Right ventricle myocardium superior (tissue), 1 donor: ENCODE measurements at regions of chr3 and their contacts with region 1.

Region 1: DNA sequence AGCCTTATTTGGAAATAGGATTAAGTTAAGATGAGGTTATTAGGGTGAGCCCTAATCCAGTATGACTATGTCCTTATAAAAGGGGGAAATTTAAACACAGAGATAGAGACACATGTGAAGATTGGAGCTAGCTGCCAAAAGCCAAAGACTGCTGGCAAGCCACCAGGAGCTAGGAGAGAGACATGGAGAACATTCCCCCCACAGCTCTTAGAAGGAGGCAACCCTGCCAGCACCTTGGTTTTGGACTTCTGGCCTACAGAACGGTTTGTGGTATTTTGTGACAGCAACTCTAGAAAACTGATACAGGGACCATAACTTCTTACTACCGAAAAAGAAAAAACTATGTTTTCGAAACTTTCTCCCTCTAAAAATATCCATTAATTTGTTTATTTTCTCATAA is 245.3 kb upstream of the RARB start:
- DNase-seq: no peak
- ATAC-seq: no peak

Region 2: DNA sequence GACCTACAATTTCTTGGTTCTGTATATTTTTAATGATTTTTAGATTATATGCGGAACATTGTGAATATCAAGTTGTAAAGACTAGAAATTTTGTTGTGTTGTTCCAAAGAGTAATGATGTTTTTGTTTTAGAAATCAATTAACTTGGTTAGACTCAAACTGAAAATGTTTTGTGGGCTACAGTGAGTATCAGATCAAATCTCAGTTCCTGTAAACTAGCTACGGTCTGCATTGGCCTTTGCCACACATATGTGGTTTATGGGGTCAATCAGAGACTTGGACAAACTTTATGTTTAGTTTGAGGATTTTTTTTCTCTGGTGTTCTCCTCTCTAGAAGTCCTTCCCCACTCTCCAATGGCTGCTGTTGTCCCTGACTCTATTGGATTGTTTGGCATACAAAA is 380.2 kb before region 1 on chr3:
- intact Hi-C with region 1: no loop called
- DNase-seq: no peak
- ATAC-seq: no peak

Region 3: DNA sequence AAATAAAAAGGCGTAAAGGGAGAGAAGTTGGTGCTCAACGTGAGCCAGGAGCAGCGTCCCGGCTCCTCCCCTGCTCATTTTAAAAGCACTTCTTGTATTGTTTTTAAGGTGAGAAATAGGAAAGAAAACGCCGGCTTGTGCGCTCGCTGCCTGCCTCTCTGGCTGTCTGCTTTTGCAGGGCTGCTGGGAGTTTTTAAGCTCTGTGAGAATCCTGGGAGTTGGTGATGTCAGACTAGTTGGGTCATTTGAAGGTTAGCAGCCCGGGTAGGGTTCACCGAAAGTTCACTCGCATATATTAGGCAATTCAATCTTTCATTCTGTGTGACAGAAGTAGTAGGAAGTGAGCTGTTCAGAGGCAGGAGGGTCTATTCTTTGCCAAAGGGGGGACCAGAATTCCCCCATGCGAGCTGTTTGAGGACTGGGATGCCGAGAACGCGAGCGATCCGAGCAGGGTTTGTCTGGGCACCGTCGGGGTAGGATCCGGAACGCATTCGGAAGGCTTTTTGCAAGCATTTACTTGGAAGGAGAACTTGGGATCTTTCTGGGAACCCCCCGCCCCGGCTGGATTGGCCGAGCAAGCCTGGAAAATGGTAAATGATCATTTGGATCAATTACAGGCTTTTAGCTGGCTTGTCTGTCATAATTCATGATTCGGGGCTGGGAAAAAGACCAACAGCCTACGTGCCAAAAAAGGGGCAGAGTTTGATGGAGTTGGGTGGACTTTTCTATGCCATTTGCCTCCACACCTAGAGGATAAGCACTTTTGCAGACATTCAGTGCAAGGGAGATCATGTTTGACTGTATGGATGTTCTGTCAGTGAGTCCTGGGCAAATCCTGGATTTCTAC is 245.4 kb after region 1 on chr3 and contains the start of gene RARB:
- intact Hi-C with region 1: loop called (anchors 10 kb)
- DNase-seq: peak; percentile 74
- ATAC-seq: peak; percentile 88
- total RNA-seq, gene RARB: 19.4 TPM